PC-9 (cell line): ENCODE measurements at regions of chr5 and their contacts with region 1.

Region 1: DNA sequence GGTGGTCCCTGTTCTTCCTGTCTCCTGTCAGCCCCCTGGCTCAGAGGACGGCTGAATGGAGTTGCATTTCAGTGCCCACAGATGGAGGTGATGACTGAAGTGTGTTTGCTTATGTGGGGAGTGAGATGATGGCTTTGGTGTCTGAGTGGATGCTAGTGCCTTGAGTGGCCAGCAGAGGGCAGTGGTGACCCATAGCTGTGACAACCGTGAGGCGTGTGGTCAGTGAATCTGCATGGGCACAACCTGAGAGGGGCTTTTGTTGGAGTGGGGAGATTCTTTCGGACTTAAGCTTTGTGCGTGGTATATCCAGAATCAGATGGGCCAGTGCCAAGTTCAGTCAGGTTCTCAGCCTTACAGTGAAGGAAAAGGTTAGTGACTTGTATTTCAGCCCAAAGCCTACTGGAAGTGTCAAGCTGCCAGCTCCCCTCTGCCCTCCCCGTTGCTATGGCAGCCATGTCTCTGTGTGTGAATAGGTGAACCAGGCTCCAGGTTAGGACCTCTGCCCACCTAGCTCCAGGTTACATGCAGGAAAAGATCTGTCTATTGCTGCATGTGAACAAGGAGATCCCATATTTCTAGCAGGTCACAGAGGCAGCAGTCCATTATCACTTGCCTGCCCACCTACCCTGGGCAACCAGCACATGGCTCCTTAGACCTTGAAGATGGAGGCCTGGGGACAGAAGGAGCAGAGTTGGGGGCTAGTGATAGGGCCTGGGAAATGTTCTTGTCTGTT is 14.7 kb upstream of the CXXC5 start:
- DNase-seq: peak; percentile 58 to 61
- H3K4me3 ChIP-seq: no peak overlapping the region
- H3K27ac ChIP-seq: no peak overlapping the region
- H3K4me1 ChIP-seq: peaks cover 30% of the 10 kb centered on the region
- H3K27me3 ChIP-seq: no peaks in the 10 kb centered on the region
- CTCF ChIP-seq: peak; percentile 98

Region 2: GRCh38 chr5:139368613-139369012 is 264.8 kb before region 1 on chr5:
- CTCF ChIA-PET with region 1: interaction called, 18 read pairs
- POLR2A ChIA-PET with region 1: no interaction called
- intact Hi-C with region 1: no loop called
- DNase-seq: no peak
- H3K4me3 ChIP-seq: no peak overlapping the region
- H3K27ac ChIP-seq: no peak overlapping the region
- H3K4me1 ChIP-seq: peaks cover 20% of the 10 kb centered on the region
- H3K27me3 ChIP-seq: no peaks in the 10 kb centered on the region
- CTCF ChIP-seq: peak; percentile 23; the same call in 1 of the 2 replicates

Region 3: DNA sequence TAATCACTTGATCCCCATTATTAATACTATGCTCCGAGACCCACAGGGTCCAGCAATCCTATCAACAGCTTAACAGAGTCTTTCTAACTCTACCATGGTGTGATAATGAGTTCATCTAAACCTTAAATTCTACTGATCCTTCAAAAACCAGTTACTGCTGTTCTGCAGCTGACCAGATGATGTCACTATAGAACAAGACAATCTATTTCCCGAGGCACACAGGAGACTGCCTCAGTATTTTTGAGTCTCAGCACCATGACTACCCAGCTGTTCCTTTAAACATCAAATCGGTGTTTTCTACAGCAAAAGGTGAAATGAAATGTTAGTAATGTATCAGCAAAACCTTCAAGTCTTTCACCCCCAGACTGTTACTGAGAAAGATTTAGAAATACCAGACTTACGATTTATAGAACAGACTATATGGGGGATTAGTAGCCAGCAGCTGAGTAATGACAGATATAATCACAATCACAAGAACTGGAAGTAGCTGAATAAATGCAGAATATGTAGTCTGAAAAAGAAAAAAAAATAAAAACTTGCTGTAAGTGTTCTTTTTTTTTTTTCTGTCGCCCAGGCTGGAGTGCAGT is 211.1 kb before region 1 on chr5:
- CTCF ChIA-PET with region 1: interaction called, 3 read pairs
- POLR2A ChIA-PET with region 1: no interaction called
- intact Hi-C with region 1: loop called (anchors 2 kb)
- DNase-seq: peak; percentile 33 to 55
- H3K4me3 ChIP-seq: no peak overlapping the region
- H3K27ac ChIP-seq: no peak overlapping the region
- H3K4me1 ChIP-seq: no peaks in the 10 kb centered on the region
- H3K27me3 ChIP-seq: no peaks in the 10 kb centered on the region
- CTCF ChIP-seq: peak; percentile 83

Region 4: GRCh38 chr5:139574641-139575312 is 58.7 kb before region 1 on chr5:
- CTCF ChIA-PET with region 1: no interaction called
- POLR2A ChIA-PET with region 1: no interaction called
- intact Hi-C with region 1: no loop called
- DNase-seq: no peak
- H3K4me3 ChIP-seq: no peak overlapping the region
- H3K27ac ChIP-seq: no peak overlapping the region
- H3K4me1 ChIP-seq: no peaks in the 10 kb centered on the region
- H3K27me3 ChIP-seq: no peaks in the 10 kb centered on the region
- CTCF ChIP-seq: peak; percentile 62

Region 5: DNA sequence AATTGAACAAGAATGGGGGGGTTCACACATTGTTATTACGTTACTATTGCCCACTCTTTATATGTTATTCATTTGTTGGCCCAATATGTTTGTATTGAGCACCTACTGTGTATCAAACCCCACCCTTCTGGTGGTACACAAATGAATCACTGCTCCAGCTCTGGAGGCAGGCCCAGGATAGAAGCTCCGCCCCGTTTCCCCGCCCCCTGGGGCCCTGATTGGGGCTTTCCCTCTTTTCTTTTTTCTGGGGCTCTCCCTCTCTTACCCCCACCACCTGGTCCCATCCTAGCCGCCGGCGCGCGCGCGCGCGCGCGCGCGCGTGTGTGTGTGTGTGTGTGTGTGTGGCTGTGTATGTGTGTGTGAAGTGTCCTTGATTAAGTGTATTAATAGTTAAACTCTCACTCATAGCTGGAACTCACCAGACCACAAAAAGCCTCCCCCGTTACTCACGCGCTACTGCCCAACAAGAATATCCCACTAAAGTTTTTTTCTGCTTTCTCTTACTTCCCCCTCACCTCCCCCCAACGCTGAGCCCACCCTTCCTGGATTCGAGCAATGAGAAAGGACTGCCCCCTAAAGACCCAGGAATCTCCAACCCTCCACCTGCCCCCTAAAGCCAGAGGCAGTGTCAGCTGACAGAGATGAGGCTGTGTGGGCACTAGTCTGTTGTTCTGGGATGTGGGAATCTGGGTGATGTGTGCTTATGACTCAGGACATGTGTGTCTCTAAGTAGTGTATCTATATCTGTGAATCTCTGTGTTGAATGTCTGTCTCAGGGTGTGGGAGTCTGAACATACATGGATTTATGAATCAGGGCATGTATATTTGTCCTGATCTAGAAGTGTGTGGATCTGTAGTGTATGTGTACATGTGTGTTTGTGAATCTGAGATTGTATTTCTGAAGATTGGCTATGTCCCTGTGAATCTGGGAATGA is 18.7 kb after region 1 on chr5:
- CTCF ChIA-PET with region 1: interaction called, 12 read pairs
- POLR2A ChIA-PET with region 1: interaction called, 5 read pairs
- intact Hi-C with region 1: loop called (anchors 1 kb)
- DNase-seq: peak; percentile 69 to 79
- H3K4me3 ChIP-seq: peak overlapping the region; percentile 97; the same call in 1 of the 2 replicates
- H3K27ac ChIP-seq: peak overlapping the region; percentile 47
- H3K4me1 ChIP-seq: peaks cover 55% of the 10 kb centered on the region
- H3K27me3 ChIP-seq: no peaks in the 10 kb centered on the region
- CTCF ChIP-seq: no peak

Region 6: DNA sequence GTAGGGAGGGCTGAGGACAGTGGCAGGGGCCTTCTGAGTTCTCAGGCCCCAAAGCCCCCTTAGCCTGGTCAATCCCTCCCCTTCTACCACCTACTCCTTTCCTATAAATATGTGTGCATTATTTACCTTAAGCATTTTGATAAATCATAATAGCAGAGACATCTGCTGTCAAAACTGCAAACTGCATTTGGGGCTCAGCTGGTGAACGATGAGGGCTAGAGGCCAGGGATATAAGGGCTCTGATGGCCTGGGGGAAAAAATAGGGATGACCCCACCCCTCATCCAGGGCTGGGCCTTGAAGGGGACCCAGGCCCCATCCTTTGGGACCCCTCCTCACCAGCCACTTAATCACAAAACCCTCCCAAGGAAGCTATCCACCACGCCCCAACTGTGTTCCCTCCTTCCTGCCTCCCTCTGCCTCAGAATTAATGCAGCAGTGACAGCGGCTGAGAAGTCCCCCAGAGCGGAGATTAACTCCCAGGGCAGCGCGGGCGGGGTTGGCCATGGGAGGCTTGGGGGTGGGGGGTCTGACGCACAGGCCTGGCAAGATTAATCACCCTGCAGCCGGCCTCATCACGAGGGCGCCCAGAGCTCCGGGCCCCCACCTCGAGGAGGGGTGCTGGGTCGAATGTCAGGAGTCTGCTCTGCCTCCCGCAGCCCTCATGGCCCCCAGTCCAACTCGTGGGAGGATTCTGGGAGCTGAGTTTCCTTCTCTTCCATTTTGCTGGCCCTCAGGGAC is 56.8 kb after region 1 on chr5:
- CTCF ChIA-PET with region 1: interaction called, 16 read pairs
- POLR2A ChIA-PET with region 1: no interaction called
- intact Hi-C with region 1: loop called (anchors 1 kb)
- DNase-seq: peak in 1 of 2 experiments; percentile 57
- H3K4me3 ChIP-seq: no peak overlapping the region
- H3K27ac ChIP-seq: no peak overlapping the region
- H3K4me1 ChIP-seq: no peaks in the 10 kb centered on the region
- H3K27me3 ChIP-seq: no peaks in the 10 kb centered on the region
- CTCF ChIP-seq: peak; percentile 74

Region 7: DNA sequence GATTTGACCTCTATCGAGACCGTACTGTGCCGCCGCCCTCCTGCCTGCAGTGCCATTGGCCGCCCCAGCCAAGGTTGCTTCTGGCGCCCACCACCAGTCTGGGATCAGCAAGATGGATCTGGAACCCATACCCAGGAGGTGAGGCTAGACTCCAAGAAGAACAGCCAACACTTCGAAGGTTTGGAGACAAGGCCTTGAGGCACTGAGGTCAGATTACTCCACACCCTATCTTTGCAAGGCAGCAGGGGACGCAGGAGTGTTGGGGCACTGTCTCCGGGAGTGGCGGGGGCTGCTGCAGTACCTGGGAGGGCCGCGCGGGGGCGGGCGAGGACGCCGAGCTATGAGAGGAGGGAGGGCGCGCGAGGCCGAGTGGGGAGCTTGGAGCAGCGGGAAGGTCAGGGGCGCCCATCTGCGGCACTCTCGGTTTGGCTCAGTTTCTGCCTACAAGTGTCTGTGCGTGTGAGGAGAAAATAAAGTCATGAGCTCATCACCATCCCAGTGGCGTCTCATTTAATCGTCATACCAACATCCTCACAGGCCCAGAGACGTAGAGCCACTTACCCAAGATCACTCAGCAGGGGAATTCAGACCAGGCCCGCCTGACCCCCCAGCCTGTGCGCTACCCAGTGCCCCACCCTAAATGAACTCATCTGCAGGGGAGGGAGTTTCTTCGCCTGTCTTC is 141.7 kb after region 1 on chr5:
- CTCF ChIA-PET with region 1: interaction called, 12 read pairs
- POLR2A ChIA-PET with region 1: no interaction called
- intact Hi-C with region 1: no loop called
- DNase-seq: peak; percentile 50 to 87
- H3K4me3 ChIP-seq: no peak overlapping the region
- H3K27ac ChIP-seq: no peak overlapping the region
- H3K4me1 ChIP-seq: no peaks in the 10 kb centered on the region
- H3K27me3 ChIP-seq: peaks cover 12% of the 10 kb centered on the region; the same call in 1 of the 2 replicates
- CTCF ChIP-seq: peak; percentile 99